ENCODE measurements at regions of chr4 and their contacts with region 1.

Region 1: DNA sequence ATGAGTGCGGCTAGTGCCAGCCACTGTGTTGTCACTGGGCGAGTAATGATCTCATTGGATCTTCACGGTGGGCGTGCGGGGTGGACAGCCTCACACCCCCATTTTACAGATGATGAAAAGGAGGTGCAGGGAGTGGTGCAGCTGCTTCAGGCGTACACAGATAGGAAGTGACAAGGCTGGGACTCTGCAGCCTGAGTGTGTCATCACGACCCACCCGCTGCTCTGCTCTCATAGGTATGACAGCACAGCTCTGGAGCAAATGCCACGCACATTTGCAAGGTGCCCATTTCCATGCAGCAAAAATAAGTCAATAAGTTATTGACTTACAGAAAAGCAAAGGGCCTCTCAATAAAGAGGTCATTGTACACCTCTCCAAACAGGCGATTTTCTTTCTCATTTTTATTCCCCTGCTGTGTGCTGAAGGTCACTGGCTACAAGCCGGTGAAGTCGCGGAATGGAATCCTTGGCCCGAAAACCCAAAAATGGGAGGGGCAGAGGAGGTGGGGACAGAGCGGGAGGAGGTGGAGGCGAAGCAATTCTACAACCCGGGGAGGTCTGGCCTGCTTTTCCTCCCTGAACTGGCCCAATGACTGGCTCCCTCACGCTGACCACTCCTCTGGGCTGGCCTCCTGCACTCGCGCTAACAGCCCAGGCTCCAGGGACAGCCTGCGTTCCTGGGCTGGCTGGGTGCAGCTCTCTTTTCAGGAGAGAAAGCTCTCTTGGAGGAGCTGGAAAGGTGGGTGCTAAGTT is at the start of gene SOD3:
- DNase-seq: peak; percentile 94
- ATAC-seq: peak; percentile 95
- H3K4me3 ChIP-seq: peak within 1 kb of the TSS; percentile 13 to 70
- H3K27ac ChIP-seq: peak within 1 kb of the TSS; percentile 98
- H3K4me1 ChIP-seq: peaks cover 0 to 3% of the 10 kb centered on the region in 2 donors
- H3K27me3 ChIP-seq: no peaks in the 10 kb centered on the region
- total RNA-seq, gene SOD3: 356 to 380 TPM

Region 2: DNA sequence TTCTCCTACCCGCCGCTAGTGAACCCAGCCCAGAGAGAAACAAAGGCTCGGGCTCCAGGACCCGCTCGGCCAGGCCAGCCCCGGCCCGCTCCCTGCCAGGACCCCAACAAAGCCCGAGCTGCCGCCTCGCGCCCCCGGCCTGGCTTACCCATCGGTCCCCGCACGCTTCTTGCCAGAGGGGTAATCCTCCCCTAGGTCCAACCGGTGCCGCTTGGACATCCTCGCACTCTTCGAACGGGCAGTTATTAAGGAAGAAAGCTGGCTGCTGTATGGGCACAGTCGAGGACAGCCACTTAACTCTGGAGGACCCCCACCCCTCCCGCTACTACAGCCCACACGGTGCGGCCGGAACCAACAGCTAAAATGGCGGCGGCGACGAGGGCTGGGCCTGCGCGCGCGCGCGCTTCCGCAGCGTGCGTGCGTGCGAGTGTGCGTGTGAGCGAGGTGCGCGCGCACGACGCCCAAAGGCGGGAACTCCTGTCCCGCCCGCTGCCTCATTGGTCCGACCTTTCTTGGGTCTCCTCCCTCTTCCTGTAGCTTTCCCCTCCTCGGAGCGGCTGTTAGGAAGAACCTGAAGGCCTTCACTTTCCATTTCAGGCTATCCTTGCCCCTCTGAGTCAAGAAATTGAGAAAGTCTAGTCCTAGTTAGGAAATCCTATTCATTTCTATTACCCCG is 210.8 kb before region 1 on chr4 and contains the start of gene DHX15:
- intact Hi-C with region 1: loop called in 1 of 2 experiments (anchors 2 kb)
- DNase-seq: peak; percentile 97 to 98
- ATAC-seq: peak; percentile 99
- H3K4me3 ChIP-seq: peak within 1 kb of the TSS; percentile 88 to 98
- H3K27ac ChIP-seq: peak within 1 kb of the TSS; percentile 89 to 92
- H3K4me1 ChIP-seq: no peaks in the 10 kb centered on the region
- H3K27me3 ChIP-seq: no peaks in the 10 kb centered on the region
- total RNA-seq, gene DHX15: 107 to 113 TPM

Region 3: GRCh38 chr4:24778464-24779225 is 16.4 kb before region 1 on chr4:
- intact Hi-C with region 1: loop called in 1 of 2 experiments (anchors 1 kb)
- DNase-seq: peak in 1 of 2 donors; percentile 72
- ATAC-seq: peak; percentile 78
- H3K4me3 ChIP-seq: no peak overlapping the region
- H3K27ac ChIP-seq: peak overlapping the region in 1 of 2 donors; percentile 26
- H3K4me1 ChIP-seq: peaks cover 2 to 6% of the 10 kb centered on the region in 2 donors
- H3K27me3 ChIP-seq: no peaks in the 10 kb centered on the region

Region 4: GRCh38 chr4:24850674-24851073 is 55.6 kb after region 1 on chr4:
- intact Hi-C with region 1: loop called in 1 of 2 experiments (anchors 5 kb)
- DNase-seq: peak in 1 of 2 donors; percentile 70
- ATAC-seq: peak; percentile 80
- H3K4me3 ChIP-seq: no peak overlapping the region
- H3K27ac ChIP-seq: peak overlapping the region; percentile 82 to 89
- H3K4me1 ChIP-seq: peaks cover 6 to 21% of the 10 kb centered on the region in 2 donors
- H3K27me3 ChIP-seq: no peaks in the 10 kb centered on the region

Region 5: DNA sequence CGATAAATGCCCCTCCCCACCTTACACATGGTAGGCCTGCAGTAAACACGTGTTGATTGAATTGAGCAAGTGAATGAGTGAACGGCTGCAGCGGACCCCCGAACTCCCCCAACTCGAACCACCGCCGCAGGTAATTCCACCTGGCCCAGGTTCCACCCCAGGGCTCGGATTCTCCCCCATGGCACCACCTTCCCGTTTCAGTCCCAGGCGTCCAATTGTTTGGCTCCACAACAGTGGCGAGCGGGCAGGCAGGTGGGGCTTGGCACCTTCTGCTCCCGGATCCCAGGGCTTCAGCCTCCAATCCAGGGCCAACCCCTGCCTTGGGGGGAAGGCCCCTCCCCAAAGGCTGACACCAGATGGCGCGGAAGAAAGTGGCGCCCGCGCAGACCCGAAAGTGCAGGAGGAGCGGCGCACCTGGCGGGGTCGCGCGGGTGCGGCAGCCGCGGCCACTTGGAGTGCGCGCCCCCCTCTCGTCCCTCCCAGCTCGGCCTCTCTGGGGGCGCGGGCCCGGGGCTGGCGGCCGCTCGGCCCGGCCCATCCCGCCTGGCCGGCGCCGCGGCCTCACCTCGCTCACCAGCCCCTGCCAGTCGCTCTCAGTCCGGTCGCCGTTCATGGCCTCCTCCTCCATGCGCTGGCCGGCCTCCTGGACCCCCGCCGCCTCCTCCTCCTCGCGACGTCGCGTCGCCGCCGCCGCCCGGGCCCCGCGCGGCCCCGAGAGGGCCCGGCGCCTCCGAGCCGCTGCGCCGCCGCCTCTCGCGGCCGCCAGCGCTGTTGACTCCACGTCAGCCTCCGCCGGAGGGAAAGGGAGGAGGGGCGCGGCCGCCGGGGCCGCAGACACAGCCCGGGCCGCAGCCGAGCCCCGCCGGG is 117.4 kb after region 1 on chr4 and contains the start of gene CCDC149:
- intact Hi-C with region 1: loop called (anchors 1 to 5 kb)
- DNase-seq: peak; percentile 73 to 88
- ATAC-seq: peak; percentile 76
- H3K4me3 ChIP-seq: peak within 1 kb of the TSS; percentile 48 to 69
- H3K27ac ChIP-seq: peak within 1 kb of the TSS; percentile 83 to 95
- H3K4me1 ChIP-seq: no peaks in the 10 kb centered on the region
- H3K27me3 ChIP-seq: no peaks in the 10 kb centered on the region
- total RNA-seq, gene CCDC149: 31.3 to 43.4 TPM